ENCODE measurements at regions of chr1 and their contacts with region 1.

Region 1: GRCh38 chr1:201042779-201043461 is 19.4 kb upstream of the KIF21B start:
- DNase-seq: peak; percentile 64 to 73
- H3K4me3 ChIP-seq: no peak overlapping the region
- H3K4me1 ChIP-seq: no peaks in the 10 kb centered on the region
- H3K27me3 ChIP-seq: no peaks in the 10 kb centered on the region

Region 2: GRCh38 chr1:200979574-200980451 is 63.1 kb before region 1 on chr1:
- in situ Hi-C with region 1: loop called (anchors 5 kb)
- DNase-seq: peak in 1 of 2 experiments; percentile 75
- H3K4me3 ChIP-seq: no peak overlapping the region
- H3K4me1 ChIP-seq: no peaks in the 10 kb centered on the region
- H3K27me3 ChIP-seq: no peaks in the 10 kb centered on the region

Measured in HAP-1 (cell line).